ENCODE measurements at regions of chr16 and their contacts with region 1.

Region 1: DNA sequence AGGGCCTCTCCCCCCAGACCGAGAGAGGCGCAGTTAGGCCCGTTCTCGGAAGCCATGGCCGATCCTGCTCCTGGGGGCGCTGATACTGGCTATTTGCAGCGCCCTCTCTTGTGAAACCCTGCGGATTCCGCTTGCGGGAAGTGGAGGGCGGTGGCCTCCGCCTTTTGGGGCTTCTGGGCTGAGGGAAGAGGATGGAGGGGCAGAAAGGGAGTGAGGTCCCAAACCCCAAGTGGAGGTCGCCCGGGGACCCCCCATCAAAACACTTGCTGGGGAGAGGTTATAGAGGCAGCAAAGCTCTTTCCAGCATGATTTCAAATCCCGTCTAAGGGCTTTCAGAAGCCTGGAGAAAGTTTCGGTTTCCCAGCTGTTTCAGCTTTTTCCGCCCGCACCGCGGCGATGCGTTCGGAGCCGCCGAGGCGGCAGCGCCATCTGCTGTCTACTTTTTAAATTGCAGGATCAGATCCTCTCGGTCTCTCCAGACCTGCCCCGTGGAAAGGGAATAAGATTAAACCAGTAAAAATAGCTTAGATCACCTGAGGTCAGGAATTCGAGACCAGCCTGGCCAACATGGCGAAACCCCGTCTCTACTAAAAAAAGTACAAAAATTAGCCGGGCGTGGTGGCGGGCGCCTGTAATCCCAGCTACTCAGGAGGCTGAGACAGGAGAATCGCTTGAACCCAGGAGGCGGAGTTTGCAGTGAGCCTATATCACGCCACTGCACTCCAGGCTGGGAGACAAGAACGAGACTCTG is 15.8 kb downstream of the SNX20 start:
- DNase-seq: peak; percentile 32
- H3K4me3 ChIP-seq: peak overlapping the region; percentile 57
- H3K27ac ChIP-seq: no peak overlapping the region
- H3K27me3 ChIP-seq: no peaks in the 10 kb centered on the region
- CTCF ChIP-seq: peak; percentile 86

Region 2: DNA sequence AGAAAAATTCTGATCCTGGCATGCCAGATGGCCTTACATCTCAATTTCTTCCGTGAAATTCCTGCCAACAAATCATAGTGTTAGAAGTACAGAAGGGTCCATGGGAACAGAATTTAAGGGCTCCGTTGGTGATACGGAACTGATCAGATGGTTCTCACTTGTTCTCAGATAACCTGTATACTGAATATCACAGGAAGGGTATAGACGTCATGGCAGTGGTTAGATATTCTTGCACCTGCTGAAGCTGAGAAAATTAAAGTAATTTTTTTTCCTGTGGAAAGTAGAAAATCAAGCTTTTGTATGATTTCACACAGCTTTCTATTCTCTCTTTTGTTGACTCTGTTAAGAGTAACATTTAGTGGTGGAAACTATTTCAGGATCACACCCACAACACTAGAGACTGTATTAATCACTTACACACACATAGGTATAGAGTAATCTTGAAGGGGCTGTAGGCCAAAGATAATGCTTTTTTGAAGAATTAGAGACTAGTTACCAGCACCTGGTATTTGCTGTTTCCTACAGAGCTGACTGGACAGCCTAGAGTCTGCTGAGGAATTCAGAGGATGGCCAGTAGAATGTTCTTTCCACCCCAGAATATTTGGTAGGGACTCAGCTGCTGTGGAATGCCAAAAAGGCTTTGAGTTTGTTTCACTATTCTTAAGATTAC is 504.7 kb before region 1 on chr16:
- CTCF ChIA-PET with region 1: interaction called, 11 read pairs
- POLR2A ChIA-PET with region 1: no interaction called
- DNase-seq: no peak
- H3K4me3 ChIP-seq: no peak overlapping the region
- H3K27ac ChIP-seq: no peak overlapping the region
- H3K27me3 ChIP-seq: no peaks in the 10 kb centered on the region
- CTCF ChIP-seq: no peak

Region 3: DNA sequence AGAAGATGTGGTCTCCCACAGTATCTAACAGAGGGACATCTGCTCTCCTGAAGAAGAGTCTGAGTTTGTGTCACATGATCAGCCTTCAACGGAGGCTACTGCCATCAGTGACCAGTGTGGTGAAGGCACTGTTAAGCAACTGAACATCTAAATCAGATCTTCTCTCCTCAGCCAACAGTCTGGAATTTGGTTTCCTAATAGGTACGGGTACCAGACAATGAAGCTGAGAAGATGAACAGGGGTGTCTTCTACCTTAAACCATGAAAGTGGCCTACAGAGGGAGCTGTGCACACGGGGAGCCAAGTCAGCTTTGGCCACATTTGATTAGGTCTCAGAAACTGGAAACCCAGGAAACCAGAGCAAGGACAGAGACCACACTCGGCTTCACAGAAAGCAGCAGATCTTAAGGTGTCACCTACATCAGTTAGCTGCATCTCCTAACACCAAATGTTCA is 338.3 kb before region 1 on chr16:
- CTCF ChIA-PET with region 1: interaction called, 13 read pairs
- POLR2A ChIA-PET with region 1: no interaction called
- DNase-seq: no peak
- H3K4me3 ChIP-seq: no peak overlapping the region
- H3K27ac ChIP-seq: no peak overlapping the region
- H3K27me3 ChIP-seq: no peaks in the 10 kb centered on the region
- CTCF ChIP-seq: peak; percentile 58

Region 4: GRCh38 chr16:50408001-50408561 is 257.2 kb before region 1 on chr16:
- CTCF ChIA-PET with region 1: no interaction called
- POLR2A ChIA-PET with region 1: no interaction called
- DNase-seq: no peak
- H3K4me3 ChIP-seq: no peak overlapping the region
- H3K27ac ChIP-seq: no peak overlapping the region
- H3K27me3 ChIP-seq: no peaks in the 10 kb centered on the region
- CTCF ChIP-seq: no peak

Region 5: DNA sequence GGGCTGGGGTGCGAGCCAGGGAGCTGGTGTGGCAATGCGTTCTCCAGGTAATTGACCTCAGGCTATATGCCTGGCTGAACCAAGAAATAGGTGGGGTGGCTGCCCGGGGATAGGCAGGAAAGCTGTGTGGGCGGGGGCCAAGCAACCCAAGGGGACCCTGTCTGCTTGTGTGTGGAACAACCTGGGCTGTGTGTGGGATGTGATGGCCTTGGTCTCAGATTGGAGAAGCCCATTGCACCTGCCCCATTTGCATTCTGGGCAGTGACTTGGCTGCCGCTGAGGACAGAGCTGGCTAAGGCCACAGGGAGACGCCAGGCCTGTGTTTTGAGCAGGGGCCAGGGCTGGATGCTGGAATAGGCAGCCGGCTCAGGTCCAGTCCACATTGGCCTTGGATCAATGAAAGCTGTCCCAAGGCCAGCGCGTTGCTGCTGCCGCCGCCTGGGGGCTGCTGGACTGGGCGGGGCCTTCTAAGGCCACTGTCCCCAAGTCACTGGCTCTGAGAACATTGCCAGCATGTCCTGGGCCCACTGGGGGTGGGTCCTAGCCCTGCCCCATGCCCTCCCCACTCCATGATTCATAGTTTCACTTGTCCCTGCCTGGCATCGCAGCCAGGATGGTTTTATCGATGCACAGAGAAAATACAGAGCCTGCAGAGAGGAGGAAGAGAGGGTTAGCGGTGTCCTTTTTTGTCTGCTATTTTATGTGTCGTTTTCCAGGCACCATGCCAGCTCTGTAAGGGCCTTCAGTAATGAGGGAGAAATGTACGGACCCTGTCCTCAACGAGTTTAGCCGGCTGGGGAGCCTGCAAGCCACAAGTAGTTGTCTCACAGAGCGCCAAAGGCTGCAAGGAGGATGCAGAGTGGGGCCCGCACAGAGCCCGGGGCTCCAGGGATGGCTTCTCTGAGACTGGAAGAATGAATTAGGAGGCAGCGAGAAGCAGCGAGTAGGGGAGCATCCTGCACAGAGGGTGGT is 73.2 kb before region 1 on chr16:
- CTCF ChIA-PET with region 1: interaction called, 59 read pairs
- POLR2A ChIA-PET with region 1: no interaction called
- DNase-seq: no peak
- H3K4me3 ChIP-seq: no peak overlapping the region
- H3K27ac ChIP-seq: no peak overlapping the region
- H3K27me3 ChIP-seq: peaks cover 11% of the 10 kb centered on the region
- CTCF ChIP-seq: no peak

Region 6: GRCh38 chr16:50653633-50654519 is 11.4 kb before region 1 on chr16:
- CTCF ChIA-PET with region 1: interaction called, 13 read pairs
- POLR2A ChIA-PET with region 1: no interaction called
- DNase-seq: no peak
- H3K4me3 ChIP-seq: no peak overlapping the region
- H3K27ac ChIP-seq: no peak overlapping the region
- H3K27me3 ChIP-seq: peaks cover 4% of the 10 kb centered on the region
- CTCF ChIP-seq: no peak

Region 7: GRCh38 chr16:50747207-50747956 is 82.1 kb after region 1 on chr16:
- CTCF ChIA-PET with region 1: interaction called, 15 read pairs
- POLR2A ChIA-PET with region 1: no interaction called
- DNase-seq: no peak
- H3K4me3 ChIP-seq: no peak overlapping the region
- H3K27ac ChIP-seq: no peak overlapping the region
- H3K27me3 ChIP-seq: no peaks in the 10 kb centered on the region
- CTCF ChIP-seq: peak; percentile 26; the same call in 1 of the 2 replicates

Region 8: GRCh38 chr16:52078716-52079655 is 1413.7 kb after region 1 on chr16:
- CTCF ChIA-PET with region 1: no interaction called
- POLR2A ChIA-PET with region 1: no interaction called
- DNase-seq: no peak
- H3K4me3 ChIP-seq: no peak overlapping the region
- H3K27ac ChIP-seq: no peak overlapping the region
- H3K27me3 ChIP-seq: no peaks in the 10 kb centered on the region
- CTCF ChIP-seq: no peak

Measured in AG04450 (cell line).